Sigmoid colon (tissue), 7 donors: ENCODE measurements at regions of chr3 and their contacts with region 1.

Region 1: DNA sequence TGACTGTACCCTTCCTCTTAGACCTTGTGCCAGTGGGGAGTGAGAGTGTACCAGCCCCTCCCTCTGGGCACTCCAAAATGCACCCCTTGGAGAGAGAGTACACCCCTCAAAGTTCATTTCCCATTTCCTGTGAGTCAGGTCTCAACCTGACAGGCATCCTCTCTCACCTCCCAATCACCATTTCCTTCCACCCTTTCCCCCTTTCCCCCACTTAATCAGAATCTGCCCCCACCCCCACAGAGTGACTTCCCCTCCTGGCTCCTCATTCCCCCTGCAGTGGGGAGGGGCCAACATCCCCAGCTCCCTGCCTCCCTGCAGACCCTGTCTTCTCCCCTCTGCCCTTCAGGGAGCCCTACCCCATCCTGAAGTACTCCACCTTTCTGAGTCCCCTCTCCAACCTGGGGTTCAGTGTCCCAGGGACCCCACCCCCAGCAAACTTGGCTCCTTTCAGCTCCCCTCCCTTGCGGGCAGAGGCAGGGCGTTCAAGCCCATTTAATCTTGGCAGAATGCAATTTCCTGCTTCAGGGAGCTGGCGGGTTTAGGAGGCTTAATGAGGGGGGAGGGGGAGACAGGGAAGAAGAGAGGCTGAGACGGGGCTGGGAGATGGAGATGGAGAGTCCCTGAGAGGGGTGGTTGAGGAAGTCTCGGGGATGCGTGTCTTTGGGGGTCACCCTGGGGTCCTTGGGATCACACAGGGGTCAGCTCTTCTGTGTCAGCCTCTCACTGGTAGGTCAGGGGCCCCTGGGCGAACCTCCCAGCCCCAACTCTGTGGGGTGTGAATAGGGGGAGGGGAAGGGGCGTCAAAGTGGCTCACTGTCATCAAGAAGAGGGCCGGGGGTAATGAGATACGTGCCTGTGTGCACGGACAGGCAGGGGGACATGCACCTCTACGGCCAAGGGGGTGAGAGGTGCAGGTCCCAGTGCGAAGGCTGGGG is 16.6 kb upstream of the SEMA3F start:
- DNase-seq: no peak
- H3K4me3 ChIP-seq: no peak overlapping the region
- H3K27ac ChIP-seq: no peak overlapping the region
- H3K4me1 ChIP-seq: no peaks in the 10 kb centered on the region
- H3K27me3 ChIP-seq: no peaks in the 10 kb centered on the region
- CTCF ChIP-seq: no peak
- EP300 ChIP-seq: no peak
- POLR2A ChIP-seq: no peak

Region 2: DNA sequence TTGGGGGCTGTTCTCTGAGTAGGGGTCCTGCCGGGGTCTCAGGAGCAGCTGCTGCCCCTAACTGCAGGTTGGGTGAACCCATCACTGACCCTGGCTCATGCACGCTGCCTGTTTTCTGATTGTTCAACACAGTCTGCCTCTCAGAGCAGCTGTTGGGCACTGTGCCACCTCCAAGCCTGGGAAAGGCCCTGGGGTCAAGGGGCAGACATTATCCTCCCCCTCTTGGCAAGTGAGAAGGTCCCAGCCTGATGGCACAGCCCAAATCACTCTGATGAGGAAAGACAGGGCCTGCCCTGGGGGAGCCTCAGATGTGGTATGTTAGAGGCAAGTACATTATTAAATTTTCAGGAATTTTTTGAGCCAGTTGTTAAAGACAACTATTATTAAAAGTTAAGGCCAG is 38.8 kb after region 1 on chr3:
- intact Hi-C with region 1: loop called (anchors 5 kb)
- DNase-seq: no peak
- H3K4me3 ChIP-seq: no peak overlapping the region
- H3K27ac ChIP-seq: no peak overlapping the region
- H3K4me1 ChIP-seq: peaks cover 0 to 8% (median 0%) of the 10 kb centered on the region in 4 donors
- H3K27me3 ChIP-seq: no peaks in the 10 kb centered on the region
- CTCF ChIP-seq: no peak
- EP300 ChIP-seq: no peak
- POLR2A ChIP-seq: no peak